PC-3 (cell line): ENCODE measurements at regions of chr3 and their contacts with region 1.

Region 1: GRCh38 chr3:111577794-111578685 is 17.1 kb downstream of the ZBED2 start:
- DNase-seq: peak; percentile 93
- ATAC-seq: peak; percentile 83
- H3K4me3 ChIP-seq: no peak overlapping the region
- H3K27ac ChIP-seq: no peak overlapping the region
- H3K4me1 ChIP-seq: peaks cover 45% of the 10 kb centered on the region
- H3K27me3 ChIP-seq: no peaks in the 10 kb centered on the region
- CTCF ChIP-seq: peak; percentile 95

Region 2: GRCh38 chr3:111616417-111617105 is 38.5 kb after region 1 on chr3:
- CTCF ChIA-PET with region 1: interaction called, 4 read pairs
- POLR2A ChIA-PET with region 1: no interaction called
- intact Hi-C with region 1: loop called (anchors 1 kb)
- DNase-seq: peak; percentile 62
- ATAC-seq: peak; percentile 12; the same call in 1 of the 2 replicates
- H3K4me3 ChIP-seq: no peak overlapping the region
- H3K27ac ChIP-seq: no peak overlapping the region
- H3K4me1 ChIP-seq: peaks cover 20% of the 10 kb centered on the region
- H3K27me3 ChIP-seq: no peaks in the 10 kb centered on the region
- CTCF ChIP-seq: peak; percentile 58

Region 3: DNA sequence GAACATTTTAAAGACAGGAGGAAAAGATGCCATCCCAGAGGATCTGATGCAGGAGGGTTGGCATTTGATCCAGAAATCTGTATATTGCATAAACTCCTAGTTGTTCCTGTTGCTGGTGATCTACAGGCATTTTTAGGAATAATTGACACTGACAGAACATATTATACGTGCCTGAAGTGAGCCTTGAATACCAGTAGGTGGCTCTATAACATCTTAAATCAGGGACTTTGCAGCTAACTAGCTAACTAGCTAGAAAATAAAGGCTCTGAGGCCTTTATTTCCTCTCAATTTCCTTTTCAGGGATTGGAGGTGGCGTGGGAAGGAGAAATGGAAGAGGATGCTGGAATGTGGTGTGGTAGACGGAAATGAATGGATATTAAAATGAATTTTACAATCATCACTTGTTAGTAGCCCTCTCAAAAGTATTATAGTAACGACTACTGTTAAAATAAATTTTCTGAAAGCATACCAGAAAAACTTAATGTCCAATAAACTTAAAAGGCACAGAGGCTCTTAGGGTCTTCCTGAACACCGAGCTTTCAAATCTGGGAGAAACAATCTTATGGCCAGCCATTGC is 91.0 kb after region 1 on chr3:
- CTCF ChIA-PET with region 1: interaction called, 13 read pairs
- POLR2A ChIA-PET with region 1: interaction called, 3 read pairs
- intact Hi-C with region 1: loop called (anchors 1 kb)
- DNase-seq: peak; percentile 81
- ATAC-seq: peak; percentile 82
- H3K4me3 ChIP-seq: no peak overlapping the region
- H3K27ac ChIP-seq: no peak overlapping the region
- H3K4me1 ChIP-seq: peaks cover 50% of the 10 kb centered on the region
- H3K27me3 ChIP-seq: no peaks in the 10 kb centered on the region
- CTCF ChIP-seq: peak; percentile 95

Region 4: GRCh38 chr3:111691293-111691909 is 113.4 kb after region 1 on chr3:
- CTCF ChIA-PET with region 1: interaction called, 28 read pairs
- POLR2A ChIA-PET with region 1: interaction called, 4 read pairs
- intact Hi-C with region 1: loop called (anchors 1 kb)
- DNase-seq: peak; percentile 73
- ATAC-seq: peak; percentile 52
- H3K4me3 ChIP-seq: no peak overlapping the region
- H3K27ac ChIP-seq: no peak overlapping the region
- H3K4me1 ChIP-seq: peaks cover 41% of the 10 kb centered on the region
- H3K27me3 ChIP-seq: no peaks in the 10 kb centered on the region
- CTCF ChIP-seq: peak; percentile 88

Region 5: GRCh38 chr3:111978493-111979433 is 400.7 kb after region 1 on chr3 and contains the start of gene ABHD10:
- CTCF ChIA-PET with region 1: no interaction called
- POLR2A ChIA-PET with region 1: no interaction called
- intact Hi-C with region 1: loop called (anchors 5 kb)
- DNase-seq: peak; percentile 100
- ATAC-seq: peak; percentile 90
- H3K4me3 ChIP-seq: peak within 1 kb of the TSS; percentile 80
- H3K27ac ChIP-seq: peak within 1 kb of the TSS; percentile 36
- H3K4me1 ChIP-seq: peaks cover 28% of the 10 kb centered on the region
- H3K27me3 ChIP-seq: no peaks in the 10 kb centered on the region
- CTCF ChIP-seq: no peak
- total RNA-seq, gene ABHD10: 29.1 and 45.0 TPM in 2 replicates